Activated T-helper 1 cell treated with anti-CD3 and anti-CD28 coated beads, Interleukin-12 subunit alpha, Interleukin-12 subunit beta, Interleukin-2, Interleukin-4 antibody, amounts not matched to agents 30 ng/mL and 10 ng/mL and 1 ng/mL, durations not matched to agents 14 hours and 24 hours and 36 hours (primary cell): ENCODE measurements at regions of chr19 and their contacts with region 1.

Region 1: GRCh38 chr19:55750715-55751114 is 8.2 kb upstream of the RFPL4A start:
- DNase-seq: no peak
- H3K4me3 Mint-ChIP-seq: no peak overlapping the region
- H3K27ac Mint-ChIP-seq: no peak overlapping the region
- H3K4me1 Mint-ChIP-seq: no peaks in the 10 kb centered on the region
- H3K27me3 Mint-ChIP-seq: no peaks in the 10 kb centered on the region

Region 2: GRCh38 chr19:55494172-55494761 is 256.4 kb before region 1 on chr19:
- intact Hi-C with region 1: no loop called
- DNase-seq: no peak
- H3K4me3 Mint-ChIP-seq: no peak overlapping the region
- H3K27ac Mint-ChIP-seq: no peak overlapping the region
- H3K4me1 Mint-ChIP-seq: no peaks in the 10 kb centered on the region
- H3K27me3 Mint-ChIP-seq: peaks cover 11% of the 10 kb centered on the region

Region 3: GRCh38 chr19:55536951-55537740 is 213.6 kb before region 1 on chr19 and contains the start of gene SBK2:
- intact Hi-C with region 1: no loop called
- DNase-seq: no peak
- H3K4me3 Mint-ChIP-seq: no peak within 1 kb of the TSS
- H3K27ac Mint-ChIP-seq: no peak within 1 kb of the TSS
- H3K4me1 Mint-ChIP-seq: no peaks in the 10 kb centered on the region
- H3K27me3 Mint-ChIP-seq: no peaks in the 10 kb centered on the region
- total RNA-seq, gene SBK2: not detected in 2 replicates

Region 4: DNA sequence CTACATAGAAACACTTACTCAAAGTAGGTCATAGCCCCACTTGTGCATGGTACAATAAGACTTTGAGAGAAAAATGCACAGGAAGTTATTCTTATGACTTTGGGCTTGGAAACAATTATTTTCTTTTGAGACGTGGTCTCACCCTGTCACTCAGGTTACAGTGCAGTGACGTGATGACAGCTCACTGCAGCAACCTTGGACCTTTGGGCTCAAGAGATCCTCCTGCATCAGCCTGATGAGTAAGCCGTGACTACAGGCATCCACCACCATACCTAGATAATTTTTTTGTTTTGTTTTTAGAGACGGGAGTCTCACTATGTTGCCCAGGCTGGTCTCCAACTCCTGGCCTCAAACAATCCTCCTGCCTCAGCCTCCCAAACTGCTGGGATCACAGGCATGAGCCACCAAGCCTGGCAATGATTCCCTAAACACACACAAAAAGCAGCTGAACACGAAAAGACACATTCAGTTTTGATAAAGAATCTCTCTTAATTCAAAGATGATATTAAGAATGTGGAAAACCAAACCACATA is 30.4 kb before region 1 on chr19:
- intact Hi-C with region 1: loop called (anchors 1 kb)
- DNase-seq: no peak
- H3K4me3 Mint-ChIP-seq: no peak overlapping the region
- H3K27ac Mint-ChIP-seq: no peak overlapping the region
- H3K4me1 Mint-ChIP-seq: no peaks in the 10 kb centered on the region
- H3K27me3 Mint-ChIP-seq: no peaks in the 10 kb centered on the region

Region 5: DNA sequence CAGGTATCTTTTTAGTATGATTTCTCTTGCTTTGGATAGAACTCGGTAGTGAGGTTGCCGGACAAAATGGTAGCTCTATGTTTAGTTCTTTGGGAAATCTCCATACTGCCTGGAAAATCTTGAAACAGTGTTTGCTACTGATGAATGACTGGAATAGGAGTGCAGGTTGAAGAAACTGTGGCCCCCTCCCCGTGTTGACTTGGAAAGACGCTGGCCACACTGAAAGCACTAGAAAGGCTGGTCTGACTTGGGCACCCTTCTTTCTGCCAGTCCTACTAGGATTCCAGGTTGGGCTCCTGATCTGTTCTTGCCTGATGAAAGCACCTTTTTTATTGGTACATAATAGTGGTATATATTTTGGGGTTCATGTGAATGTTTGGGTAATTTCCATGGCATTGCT is 131.9 kb after region 1 on chr19:
- intact Hi-C with region 1: no loop called
- DNase-seq: no peak
- H3K4me3 Mint-ChIP-seq: no peak overlapping the region
- H3K27ac Mint-ChIP-seq: no peak overlapping the region
- H3K4me1 Mint-ChIP-seq: no peaks in the 10 kb centered on the region
- H3K27me3 Mint-ChIP-seq: no peaks in the 10 kb centered on the region